ENCODE measurements at regions of chr3 and their contacts with region 1.

Region 1: GRCh38 chr3:8607234-8608040 is 37.2 kb downstream of the SSUH2 start:
- DNase-seq: no peak
- H3K4me3 ChIP-seq: no peak overlapping the region
- H3K27ac ChIP-seq: no peak overlapping the region
- H3K4me1 ChIP-seq: peaks cover 0 to 3% (median 0%) of the 10 kb centered on the region in 4 donors
- H3K27me3 ChIP-seq: no peaks in the 10 kb centered on the region
- CTCF ChIP-seq: peak; percentile 17 to 50 (median 36)
- EP300 ChIP-seq: no peak
- POLR2A ChIP-seq: no peak

Region 2: GRCh38 chr3:7999384-7999783 is 608.1 kb before region 1 on chr3:
- in situ Hi-C with region 1: no loop called
- intact Hi-C with region 1: no loop called
- DNase-seq: no peak
- H3K4me3 ChIP-seq: no peak overlapping the region
- H3K27ac ChIP-seq: no peak overlapping the region
- H3K4me1 ChIP-seq: no peaks in the 10 kb centered on the region
- H3K27me3 ChIP-seq: no peaks in the 10 kb centered on the region
- CTCF ChIP-seq: no peak
- EP300 ChIP-seq: no peak
- POLR2A ChIP-seq: no peak

Region 3: GRCh38 chr3:8482960-8483665 is 124.3 kb before region 1 on chr3:
- in situ Hi-C with region 1: no loop called
- intact Hi-C with region 1: loop called (anchors 1 kb)
- DNase-seq: peak; percentile 23
- H3K4me3 ChIP-seq: no peak overlapping the region
- H3K27ac ChIP-seq: peak overlapping the region; percentile 6 to 66 (median 46)
- H3K4me1 ChIP-seq: no peaks in the 10 kb centered on the region
- H3K27me3 ChIP-seq: no peaks in the 10 kb centered on the region
- CTCF ChIP-seq: no peak
- EP300 ChIP-seq: no peak
- POLR2A ChIP-seq: no peak

Region 4: GRCh38 chr3:8503871-8504610 is 103.4 kb before region 1 on chr3:
- in situ Hi-C with region 1: no loop called
- intact Hi-C with region 1: no loop called
- DNase-seq: no peak
- H3K4me3 ChIP-seq: peak overlapping the region in 1 of 4 donors; percentile 5
- H3K27ac ChIP-seq: peak overlapping the region; percentile 50 to 68 (median 64)
- H3K4me1 ChIP-seq: peaks cover 13 to 45% (median 26%) of the 10 kb centered on the region in 4 donors
- H3K27me3 ChIP-seq: no peaks in the 10 kb centered on the region
- CTCF ChIP-seq: no peak
- EP300 ChIP-seq: no peak
- POLR2A ChIP-seq: no peak

Measured in transverse colon (tissue), 4 donors.